ENCODE measurements at regions of chr6 and their contacts with region 1.

Region 1: GRCh38 chr6:18457065-18457812 is 70.1 kb downstream of the RNF144B start:
- DNase-seq: peak in 1 of 2 donors; percentile 84
- ATAC-seq: peak; percentile 31 to 82
- H3K4me3 ChIP-seq: peak overlapping the region in 2 of 4 donors; percentile 11 to 21
- H3K27ac ChIP-seq: peak overlapping the region; percentile 79 to 88 (median 82)
- H3K4me1 ChIP-seq: peaks cover 49 to 51% of the 10 kb centered on the region in 2 donors
- H3K27me3 ChIP-seq: no peaks in the 10 kb centered on the region
- CTCF ChIP-seq: no peak
- POLR2A ChIP-seq: no peak

Region 2: DNA sequence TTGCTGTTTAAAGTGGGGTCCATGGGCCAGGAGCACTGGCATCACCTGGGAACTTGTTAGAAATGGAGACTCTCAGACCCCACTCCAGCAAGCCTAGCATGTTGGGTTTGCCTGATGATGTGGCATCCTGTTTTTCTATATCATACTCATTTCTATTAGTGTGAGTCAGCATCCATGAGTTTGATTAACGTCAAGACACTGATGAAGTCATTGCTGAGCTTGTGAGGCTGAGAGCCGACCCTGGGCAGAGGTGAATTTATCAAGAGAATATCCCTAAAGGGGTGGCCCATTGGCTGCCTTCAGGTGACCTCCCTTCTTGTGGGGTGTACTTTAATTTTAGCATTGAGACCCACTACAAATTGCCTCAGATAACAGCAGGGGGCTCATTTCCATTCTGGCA is 113.5 kb before region 1 on chr6:
- in situ Hi-C with region 1: loop called in 1 of 4 experiments (anchors 25 kb)
- intact Hi-C with region 1: loop called (anchors 2 kb)
- DNase-seq: no peak
- ATAC-seq: no peak
- H3K4me3 ChIP-seq: no peak overlapping the region
- H3K27ac ChIP-seq: peak overlapping the region; percentile 82 to 89 (median 89)
- H3K4me1 ChIP-seq: peaks cover 39 to 42% of the 10 kb centered on the region in 2 donors
- H3K27me3 ChIP-seq: no peaks in the 10 kb centered on the region
- CTCF ChIP-seq: no peak
- POLR2A ChIP-seq: no peak

Region 3: GRCh38 chr6:18387061-18387721 is 70.0 kb before region 1 on chr6 and contains the start of gene RNF144B:
- in situ Hi-C with region 1: no loop called
- intact Hi-C with region 1: loop called (anchors 2 kb)
- DNase-seq: peak; percentile 91 to 94
- ATAC-seq: peak; percentile 83 to 85
- H3K4me3 ChIP-seq: peak within 1 kb of the TSS; percentile 60 to 71 (median 63)
- H3K27ac ChIP-seq: peak within 1 kb of the TSS; percentile 87 to 92 (median 90)
- H3K4me1 ChIP-seq: peaks cover 36 to 44% of the 10 kb centered on the region in 2 donors
- H3K27me3 ChIP-seq: no peaks in the 10 kb centered on the region
- CTCF ChIP-seq: peak in 1 of 5 experiments; percentile 15
- POLR2A ChIP-seq: peak; percentile 75 to 91
- total RNA-seq, gene RNF144B: 8.4 to 47.0 (median 31.9) TPM

Region 4: DNA sequence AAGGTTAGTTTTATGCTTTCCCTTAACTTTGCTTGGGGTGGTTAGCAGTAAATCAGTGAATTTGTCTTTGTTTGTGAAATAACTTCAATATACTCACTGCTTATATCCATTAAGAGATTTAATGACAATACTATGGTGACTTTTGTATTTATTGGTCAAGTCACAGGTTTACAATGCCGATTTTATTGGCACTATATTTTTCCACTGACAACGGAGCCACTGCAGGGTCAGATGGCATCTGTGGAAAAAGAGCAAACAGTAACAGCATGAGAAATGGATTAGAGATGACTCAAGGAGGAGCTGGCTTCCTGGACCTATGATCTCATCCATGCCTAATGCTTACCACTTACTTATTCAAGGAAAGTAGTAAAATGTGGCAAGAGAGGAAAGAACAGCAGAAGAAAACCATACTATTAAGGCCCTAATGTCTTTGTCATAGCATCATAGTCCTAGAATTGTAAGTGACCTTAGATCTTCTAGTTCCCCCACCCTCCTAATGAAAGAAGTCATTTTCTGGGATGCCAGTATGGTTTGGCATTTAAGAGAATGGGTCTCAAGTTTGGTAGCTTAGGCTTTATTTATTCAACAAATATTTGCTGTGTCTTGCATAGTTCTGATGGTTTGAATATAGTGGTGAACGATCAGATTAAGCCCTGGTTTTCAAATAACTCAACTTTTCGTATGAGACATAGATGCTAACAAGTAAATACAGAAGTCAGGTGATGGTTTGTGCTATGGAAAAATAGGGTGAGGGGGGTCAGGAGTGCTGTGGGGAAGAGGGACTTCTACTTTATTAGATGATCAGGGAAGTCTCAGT is 51.6 kb before region 1 on chr6:
- in situ Hi-C with region 1: no loop called
- intact Hi-C with region 1: no loop called
- DNase-seq: no peak
- ATAC-seq: peak; percentile 38 to 77
- H3K4me3 ChIP-seq: no peak overlapping the region
- H3K27ac ChIP-seq: peak overlapping the region; percentile 83 to 93 (median 86)
- H3K4me1 ChIP-seq: peaks cover 58 to 67% of the 10 kb centered on the region in 2 donors
- H3K27me3 ChIP-seq: no peaks in the 10 kb centered on the region
- CTCF ChIP-seq: no peak
- POLR2A ChIP-seq: no peak

Region 5: DNA sequence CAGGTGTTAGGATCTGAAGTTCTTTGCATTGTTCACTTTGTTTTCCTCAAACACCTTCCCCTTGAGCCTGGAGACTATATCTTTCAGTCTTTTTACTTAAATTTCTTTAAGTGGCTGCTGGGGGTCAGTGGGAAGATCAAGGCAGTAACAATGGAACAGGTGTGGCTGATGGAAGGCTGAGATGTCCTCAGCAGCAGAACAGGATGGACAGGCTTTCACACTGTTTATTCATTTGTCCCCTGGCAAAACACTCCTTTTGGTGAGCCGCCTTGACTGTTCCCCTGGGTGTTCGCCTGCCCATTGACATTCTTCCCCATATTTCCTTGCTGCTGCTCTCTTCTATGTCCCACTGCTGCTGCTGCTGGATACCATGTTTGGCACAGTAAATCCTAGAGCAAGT is 32.0 kb before region 1 on chr6:
- in situ Hi-C with region 1: no loop called
- intact Hi-C with region 1: no loop called
- DNase-seq: no peak
- ATAC-seq: peak in 1 of 2 donors; percentile 40
- H3K4me3 ChIP-seq: no peak overlapping the region
- H3K27ac ChIP-seq: peak overlapping the region; percentile 30 to 62 (median 58)
- H3K4me1 ChIP-seq: peaks cover 75 to 77% of the 10 kb centered on the region in 2 donors
- H3K27me3 ChIP-seq: no peaks in the 10 kb centered on the region
- CTCF ChIP-seq: no peak
- POLR2A ChIP-seq: no peak

Measured in gastrocnemius medialis (tissue), 4 donors.